ENCODE measurements at regions of chr10 and their contacts with region 1.

Region 1: GRCh38 chr10:125734823-125735222 is 15.3 kb downstream of the EDRF1 start:
- DNase-seq: no peak
- H3K4me3 ChIP-seq: no peak overlapping the region
- H3K4me3 Mint-ChIP-seq: no peak overlapping the region
- H3K27ac ChIP-seq: no peak overlapping the region
- H3K27ac Mint-ChIP-seq: no peak overlapping the region
- H3K4me1 ChIP-seq: no peaks in the 10 kb centered on the region
- H3K4me1 Mint-ChIP-seq: no peaks in the 10 kb centered on the region
- H3K27me3 ChIP-seq: no peaks in the 10 kb centered on the region
- H3K27me3 Mint-ChIP-seq: peaks cover 0 to 2% (median 0%) of the 10 kb centered on the region in 3 donors
- CTCF ChIP-seq: no peak

Region 2: DNA sequence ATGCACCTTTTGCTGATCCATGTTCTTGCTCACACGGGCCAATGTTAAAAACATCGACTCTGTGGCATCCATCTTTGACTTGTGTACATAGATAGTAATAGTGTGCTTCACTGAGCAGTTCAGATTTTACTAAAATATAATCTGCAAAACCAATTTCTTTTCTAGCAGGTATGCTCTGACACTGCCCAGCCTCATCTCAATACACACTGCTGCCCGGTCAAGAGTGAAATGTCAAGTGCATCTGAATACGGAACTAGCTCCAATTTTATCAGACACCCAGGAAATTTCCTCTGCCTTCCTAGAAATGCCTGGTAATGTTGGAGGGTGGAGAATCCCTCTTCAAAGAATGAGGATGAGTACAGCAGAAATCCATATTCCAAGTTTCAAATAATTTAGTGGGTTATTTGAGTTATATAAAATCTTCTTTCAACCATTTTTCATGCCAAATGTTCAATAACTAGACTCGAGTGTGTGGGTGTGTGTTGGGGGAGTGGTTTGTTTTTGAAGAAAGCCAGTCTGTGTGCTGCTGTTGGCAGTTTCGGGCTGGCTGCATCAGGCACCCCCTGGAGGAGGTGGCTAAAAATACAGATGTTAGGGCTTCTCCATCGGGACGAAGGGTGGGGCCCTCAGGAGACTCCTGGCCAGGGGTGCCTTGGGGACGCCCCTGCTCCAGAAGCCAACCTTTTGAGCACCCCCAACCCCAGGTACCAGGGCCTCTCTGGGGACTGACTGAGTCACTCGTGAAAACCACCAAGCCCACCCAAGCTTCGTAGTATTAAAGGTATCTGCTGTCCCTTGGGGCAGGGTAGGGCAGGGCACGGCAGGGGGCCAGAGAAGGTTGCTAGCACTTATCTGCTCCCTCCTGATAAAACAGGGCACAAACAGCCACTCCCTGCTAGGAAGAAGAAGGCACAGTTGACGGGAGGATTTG is 589.9 kb before region 1 on chr10:
- intact Hi-C with region 1: loop called in 1 of 2 experiments (anchors 10 kb)
- DNase-seq: peak in 1 of 3 donors; percentile 24
- H3K4me3 ChIP-seq: no peak overlapping the region
- H3K4me3 Mint-ChIP-seq: peak overlapping the region in 1 of 2 donors; percentile 45
- H3K27ac ChIP-seq: no peak overlapping the region
- H3K27ac Mint-ChIP-seq: peak overlapping the region in 5 of 7 donors; percentile 5 to 79 (median 31)
- H3K4me1 ChIP-seq: peaks cover 54 to 60% of the 10 kb centered on the region in 2 donors
- H3K4me1 Mint-ChIP-seq: peaks cover 75% of the 10 kb centered on the region
- H3K27me3 ChIP-seq: no peaks in the 10 kb centered on the region
- H3K27me3 Mint-ChIP-seq: peaks cover 0 to 1% (median 0%) of the 10 kb centered on the region in 3 donors
- CTCF ChIP-seq: peak; percentile 46

Region 3: GRCh38 chr10:125238682-125239081 is 496.1 kb before region 1 on chr10:
- intact Hi-C with region 1: no loop called
- DNase-seq: no peak
- H3K4me3 ChIP-seq: no peak overlapping the region
- H3K4me3 Mint-ChIP-seq: no peak overlapping the region
- H3K27ac ChIP-seq: no peak overlapping the region
- H3K27ac Mint-ChIP-seq: no peak overlapping the region
- H3K4me1 ChIP-seq: no peaks in the 10 kb centered on the region
- H3K4me1 Mint-ChIP-seq: no peaks in the 10 kb centered on the region
- H3K27me3 ChIP-seq: no peaks in the 10 kb centered on the region
- H3K27me3 Mint-ChIP-seq: peaks cover 1 to 3% (median 2%) of the 10 kb centered on the region in 3 donors
- CTCF ChIP-seq: no peak

Region 4: GRCh38 chr10:125817337-125817946 is 82.6 kb after region 1 on chr10:
- intact Hi-C with region 1: loop called in 1 of 2 experiments (anchors 5 kb)
- DNase-seq: no peak
- H3K4me3 ChIP-seq: no peak overlapping the region
- H3K4me3 Mint-ChIP-seq: no peak overlapping the region
- H3K27ac ChIP-seq: no peak overlapping the region
- H3K27ac Mint-ChIP-seq: no peak overlapping the region
- H3K4me1 ChIP-seq: peaks cover 8 to 9% of the 10 kb centered on the region in 2 donors
- H3K4me1 Mint-ChIP-seq: peaks cover 14% of the 10 kb centered on the region
- H3K27me3 ChIP-seq: no peaks in the 10 kb centered on the region
- H3K27me3 Mint-ChIP-seq: peaks cover 0 to 1% (median 0%) of the 10 kb centered on the region in 3 donors
- CTCF ChIP-seq: no peak